Panc1 (cell line): ENCODE measurements at regions of chr3 and their contacts with region 1.

Region 1: DNA sequence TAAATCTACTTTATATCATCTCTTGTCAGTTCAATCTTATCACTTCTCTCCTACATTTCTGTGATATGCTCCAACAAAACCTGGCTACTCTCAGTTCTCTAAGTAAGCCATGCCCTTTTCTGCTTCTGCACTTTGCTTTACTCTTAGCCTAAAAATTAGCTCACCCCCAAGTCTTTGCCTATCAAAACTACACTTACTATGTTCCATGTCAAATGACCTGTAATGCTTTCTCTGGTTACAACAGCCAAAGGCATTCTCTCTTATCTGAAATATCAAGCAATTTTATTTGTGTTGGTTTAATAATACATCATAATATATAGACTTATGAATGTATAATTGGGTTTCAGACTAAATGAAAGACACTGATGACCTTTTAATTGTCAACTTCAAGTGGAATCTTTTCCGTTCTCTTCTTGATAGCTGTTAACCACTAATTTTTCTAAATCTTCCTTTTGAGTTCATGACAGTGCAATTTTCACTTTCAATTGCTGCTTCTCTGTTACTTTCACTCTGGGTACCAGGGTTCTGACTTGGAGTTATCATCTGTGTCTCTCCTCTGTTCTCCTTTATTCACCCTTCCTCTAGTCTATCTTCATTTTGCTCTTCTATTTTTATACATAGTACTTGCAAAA is 619.0 kb upstream of the GOLIM4 start:
- DNase-seq: no peak
- ATAC-seq: no peak
- H3K4me3 ChIP-seq: no peak overlapping the region
- H3K27ac ChIP-seq: no peak overlapping the region
- H3K4me1 ChIP-seq: no peaks in the 10 kb centered on the region
- H3K27me3 ChIP-seq: no peaks in the 10 kb centered on the region
- CTCF ChIP-seq: no peak

Region 2: GRCh38 chr3:168671082-168671481 is 43.6 kb before region 1 on chr3:
- CTCF ChIA-PET with region 1: no interaction called
- POLR2A ChIA-PET with region 1: no interaction called
- in situ Hi-C with region 1: no loop called
- intact Hi-C with region 1: loop called (anchors 10 kb)
- DNase-seq: no peak
- ATAC-seq: no peak
- H3K4me3 ChIP-seq: no peak overlapping the region
- H3K27ac ChIP-seq: no peak overlapping the region
- H3K4me1 ChIP-seq: no peaks in the 10 kb centered on the region
- H3K27me3 ChIP-seq: no peaks in the 10 kb centered on the region
- CTCF ChIP-seq: no peak